HEK293 (cell line): ENCODE measurements at regions of chr15 and their contacts with region 1.

Region 1: GRCh38 chr15:66720206-66721006 is 18.4 kb downstream of the SMAD6 start:
- H3K4me3 ChIP-seq: no peak overlapping the region
- H3K27ac ChIP-seq: no peak overlapping the region
- H3K4me1 ChIP-seq: no peaks in the 10 kb centered on the region
- CTCF ChIP-seq: no peak

Region 2: GRCh38 chr15:66504563-66505429 is 215.6 kb before region 1 on chr15 and contains the starts of genes RPL4 and ZWILCH:
- CTCF ChIA-PET with region 1: no interaction called
- POLR2A ChIA-PET with region 1: no interaction called
- H3K4me3 ChIP-seq: peak within 1 kb of the TSS; percentile 76
- H3K27ac ChIP-seq: peak within 1 kb of the TSS; percentile 86
- H3K4me1 ChIP-seq: peaks cover 5% of the 10 kb centered on the region; the same call in 1 of the 2 replicates
- CTCF ChIP-seq: peak; percentile 20; the same call in 1 of the 2 replicates

Region 3: DNA sequence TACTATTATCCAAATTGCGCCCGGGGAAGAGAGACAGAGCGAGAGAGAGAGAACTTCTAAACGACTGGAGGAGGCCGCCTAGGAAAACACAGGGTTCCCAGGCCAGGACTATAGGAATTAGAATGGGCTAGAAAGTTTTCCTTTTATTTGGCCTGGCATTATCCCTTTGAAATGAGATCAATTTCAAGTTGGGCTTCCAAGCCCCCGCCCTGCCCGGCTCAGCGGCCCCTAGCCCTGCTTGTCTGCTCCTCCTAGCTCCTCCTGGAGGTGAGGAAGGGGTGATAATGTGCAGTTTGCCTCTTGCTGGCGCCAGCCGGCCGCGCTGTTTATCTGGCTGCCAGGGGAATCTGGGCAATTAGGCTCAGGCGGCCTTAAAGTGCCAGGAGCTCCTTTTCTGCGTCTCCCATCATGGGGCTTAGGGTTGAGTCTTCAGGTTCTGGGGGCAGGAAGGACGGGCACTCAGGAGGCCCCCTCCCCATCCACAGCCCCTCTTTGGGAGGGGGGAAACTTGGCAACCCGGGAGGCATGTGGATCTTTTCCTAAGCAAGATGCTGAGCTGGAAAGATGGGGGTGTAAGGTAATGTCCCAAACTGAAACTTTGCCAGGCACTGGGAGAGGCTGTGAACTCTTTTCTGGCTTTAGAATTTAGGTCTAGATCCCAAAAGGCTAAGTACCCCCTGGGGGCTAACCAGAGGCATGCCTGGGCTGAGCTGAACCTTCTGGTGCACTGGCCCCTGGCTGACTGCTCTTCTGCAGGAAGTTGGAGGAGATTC is 12.9 kb before region 1 on chr15:
- CTCF ChIA-PET with region 1: interaction called, 10 read pairs
- POLR2A ChIA-PET with region 1: interaction called, 10 read pairs
- H3K4me3 ChIP-seq: no peak overlapping the region
- H3K27ac ChIP-seq: peak overlapping the region; percentile 27
- H3K4me1 ChIP-seq: peaks cover 32% of the 10 kb centered on the region
- CTCF ChIP-seq: peak; percentile 61; the same call in 1 of the 2 replicates

Region 4: DNA sequence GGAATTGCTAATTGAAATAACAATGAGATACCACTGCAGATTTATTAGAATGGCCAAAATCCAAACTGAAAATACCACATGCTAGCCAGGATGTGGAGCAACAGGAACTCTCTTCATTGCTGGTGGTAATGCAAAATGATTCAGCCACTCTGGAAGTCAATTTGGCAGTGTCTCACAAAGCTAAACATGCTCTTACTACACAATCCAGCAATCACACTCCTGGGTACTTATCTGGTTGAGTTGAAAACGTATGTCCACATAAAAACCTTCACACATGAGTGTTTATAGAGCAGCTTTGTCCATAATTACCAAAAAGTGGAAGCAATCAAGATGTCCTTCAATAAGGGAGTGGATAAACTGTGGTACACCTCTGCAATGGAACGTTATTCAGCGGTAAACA is 94.9 kb after region 1 on chr15:
- CTCF ChIA-PET with region 1: no interaction called
- POLR2A ChIA-PET with region 1: no interaction called
- H3K4me3 ChIP-seq: no peak overlapping the region
- H3K27ac ChIP-seq: no peak overlapping the region
- H3K4me1 ChIP-seq: no peaks in the 10 kb centered on the region
- CTCF ChIP-seq: no peak

Region 5: GRCh38 chr15:66827039-66827697 is 106.8 kb after region 1 on chr15:
- CTCF ChIA-PET with region 1: no interaction called
- POLR2A ChIA-PET with region 1: no interaction called
- H3K4me3 ChIP-seq: no peak overlapping the region
- H3K27ac ChIP-seq: no peak overlapping the region
- H3K4me1 ChIP-seq: no peaks in the 10 kb centered on the region
- CTCF ChIP-seq: no peak